Mammary epithelial cell (primary cell): ENCODE measurements at regions of chr3 and their contacts with region 1.

Region 1: GRCh38 chr3:180250169-180250568 is 213.4 kb upstream of the PEX5L start:
- DNase-seq: peak; percentile 79
- H3K4me3 ChIP-seq: no peak overlapping the region
- H3K27ac ChIP-seq: no peak overlapping the region
- H3K4me1 ChIP-seq: peaks cover 48% of the 10 kb centered on the region
- H3K27me3 ChIP-seq: no peaks in the 10 kb centered on the region
- CTCF ChIP-seq: no peak

Region 2: DNA sequence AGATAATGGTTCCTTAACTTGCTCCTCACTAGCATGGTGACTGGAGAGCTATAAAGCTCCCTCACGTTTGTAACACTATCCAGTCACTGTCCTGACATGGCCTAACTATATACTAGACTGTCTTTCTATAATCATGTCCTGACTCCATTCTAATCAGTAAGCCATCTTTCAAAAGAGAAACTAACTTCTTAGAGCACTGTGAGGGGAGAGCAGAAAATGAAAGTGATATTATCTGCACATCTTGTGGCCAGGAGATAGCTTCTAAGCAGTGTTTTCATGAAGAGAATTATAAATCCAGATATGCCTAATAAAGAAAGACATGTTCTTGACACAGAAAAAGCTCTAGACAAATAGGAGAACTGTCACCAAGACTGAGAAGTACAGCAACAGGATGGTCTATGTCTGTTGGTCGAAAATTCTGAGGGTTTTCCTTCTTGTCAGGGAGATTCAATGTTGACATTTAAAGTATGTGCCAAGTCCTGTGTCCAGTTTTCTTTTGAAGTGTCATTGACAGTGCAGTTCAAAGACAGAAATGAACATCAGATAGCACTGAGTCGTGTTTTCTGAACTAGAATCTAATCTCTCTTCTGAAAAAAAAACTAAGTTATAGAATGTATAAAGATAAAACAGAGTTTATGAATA is 17.2 kb after region 1 on chr3:
- CTCF ChIA-PET with region 1: no interaction called
- dilution Hi-C with region 1: no loop called
- in situ Hi-C with region 1: no loop called
- intact Hi-C with region 1: no loop called
- DNase-seq: peak; percentile 15
- H3K4me3 ChIP-seq: peak overlapping the region in 2 of 3 experiments; percentile 23 to 29
- H3K27ac ChIP-seq: no peak overlapping the region
- H3K4me1 ChIP-seq: peaks cover 2% of the 10 kb centered on the region
- H3K27me3 ChIP-seq: no peaks in the 10 kb centered on the region
- CTCF ChIP-seq: no peak

Region 3: GRCh38 chr3:180492047-180492446 is 241.9 kb after region 1 on chr3:
- CTCF ChIA-PET with region 1: no interaction called
- dilution Hi-C with region 1: no loop called
- in situ Hi-C with region 1: no loop called
- intact Hi-C with region 1: loop called (anchors 2 kb)
- DNase-seq: peak; percentile 51
- H3K4me3 ChIP-seq: peak overlapping the region in 2 of 3 experiments; percentile 54 to 67
- H3K27ac ChIP-seq: peak overlapping the region; percentile 60
- H3K4me1 ChIP-seq: peaks cover 14% of the 10 kb centered on the region
- H3K27me3 ChIP-seq: no peaks in the 10 kb centered on the region
- CTCF ChIP-seq: no peak

Region 4: DNA sequence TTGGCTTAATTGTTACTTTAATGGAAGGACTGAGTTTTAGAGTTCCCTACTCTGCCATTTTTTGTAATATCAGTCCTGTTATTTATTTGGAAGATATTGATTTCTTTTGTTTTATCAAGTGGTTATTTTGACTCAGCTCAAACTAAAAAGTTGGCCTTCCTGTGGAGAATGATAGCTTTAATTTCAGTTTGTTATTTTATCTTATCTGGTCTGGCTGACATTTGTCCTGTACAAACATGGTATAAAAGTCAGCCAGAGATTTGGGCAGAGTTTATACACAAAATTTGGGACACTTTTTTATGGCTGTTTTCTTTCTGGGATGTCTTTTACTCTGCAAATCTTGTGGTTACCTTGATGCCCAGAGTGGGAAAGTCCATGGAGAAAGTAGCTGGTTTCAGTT is 780.8 kb after region 1 on chr3:
- CTCF ChIA-PET with region 1: no interaction called
- dilution Hi-C with region 1: no loop called
- in situ Hi-C with region 1: no loop called
- intact Hi-C with region 1: no loop called
- DNase-seq: no peak
- H3K4me3 ChIP-seq: no peak overlapping the region
- H3K27ac ChIP-seq: no peak overlapping the region
- H3K4me1 ChIP-seq: no peaks in the 10 kb centered on the region
- H3K27me3 ChIP-seq: peaks cover 2% of the 10 kb centered on the region
- CTCF ChIP-seq: no peak